Testis (tissue), 5 donors: ENCODE measurements at regions of chr9 and their contacts with region 1.

Region 1: GRCh38 chr9:97468658-97469448 is 32.6 kb upstream of the TMOD1 start:
- DNase-seq: peak; percentile 85
- H3K4me3 ChIP-seq: no peak overlapping the region
- H3K27ac ChIP-seq: no peak overlapping the region
- H3K4me1 ChIP-seq: no peaks in the 10 kb centered on the region
- H3K27me3 ChIP-seq: no peaks in the 10 kb centered on the region
- CTCF ChIP-seq: peak; percentile 54 to 76 (median 57)
- POLR2A ChIP-seq: no peak

Region 2: GRCh38 chr9:97598461-97599288 is 129.8 kb after region 1 on chr9:
- intact Hi-C with region 1: loop called (anchors 5 kb)
- DNase-seq: peak; percentile 89
- H3K4me3 ChIP-seq: no peak overlapping the region
- H3K27ac ChIP-seq: no peak overlapping the region
- H3K4me1 ChIP-seq: peaks cover 10% of the 10 kb centered on the region
- H3K27me3 ChIP-seq: no peaks in the 10 kb centered on the region
- CTCF ChIP-seq: peak; percentile 47 to 74 (median 57)
- POLR2A ChIP-seq: no peak

Region 3: DNA sequence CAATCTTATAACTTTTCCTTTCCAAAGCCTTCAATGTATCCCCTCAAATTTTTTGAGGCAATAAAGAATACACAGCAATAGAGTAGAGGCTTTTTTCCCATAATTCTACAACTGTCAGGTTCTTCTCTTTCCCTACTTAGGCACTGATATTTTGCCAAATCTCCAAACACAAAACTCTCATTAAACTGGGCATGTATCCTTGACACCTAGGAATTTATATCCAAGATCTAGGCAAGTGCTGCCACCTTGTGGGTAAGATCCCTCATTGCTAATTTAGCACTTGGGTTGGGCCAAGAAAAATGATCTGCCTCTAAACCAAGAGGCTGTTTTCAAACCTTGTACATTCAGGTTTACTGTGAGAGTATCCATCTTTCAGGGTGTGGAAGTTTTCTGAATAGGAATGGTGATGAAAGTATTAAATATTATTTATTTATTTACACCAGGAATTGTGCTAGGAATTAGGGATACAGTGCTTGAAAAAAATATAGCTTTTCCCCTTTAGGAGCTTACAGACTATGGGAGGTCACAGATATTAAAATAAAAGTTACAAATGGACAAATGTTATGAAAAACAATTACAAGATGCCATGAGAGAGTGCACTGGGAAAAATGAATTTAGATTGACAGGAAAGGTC is 146.7 kb after region 1 on chr9:
- intact Hi-C with region 1: loop called (anchors 5 kb)
- DNase-seq: peak; percentile 85
- H3K4me3 ChIP-seq: no peak overlapping the region
- H3K27ac ChIP-seq: no peak overlapping the region
- H3K4me1 ChIP-seq: no peaks in the 10 kb centered on the region
- H3K27me3 ChIP-seq: no peaks in the 10 kb centered on the region
- CTCF ChIP-seq: peak; percentile 74 to 86 (median 82)
- POLR2A ChIP-seq: no peak

Region 4: GRCh38 chr9:97740848-97741821 is 272.3 kb after region 1 on chr9:
- intact Hi-C with region 1: no loop called
- DNase-seq: peak; percentile 61
- H3K4me3 ChIP-seq: peak overlapping the region; percentile 36 to 42
- H3K27ac ChIP-seq: peak overlapping the region in 1 of 2 donors; percentile 24
- H3K4me1 ChIP-seq: peaks cover 4% of the 10 kb centered on the region
- H3K27me3 ChIP-seq: no peaks in the 10 kb centered on the region
- CTCF ChIP-seq: no peak
- POLR2A ChIP-seq: no peak